ENCODE measurements at regions of chr20 and their contacts with region 1.

Region 1: GRCh38 chr20:32902456-32903420 is 44.0 kb downstream of the EFCAB8 start:
- DNase-seq: peak; percentile 90
- H3K4me3 ChIP-seq: no peak overlapping the region
- H3K27ac ChIP-seq: no peak overlapping the region
- H3K4me1 ChIP-seq: peaks cover 0 to 7% (median 2%) of the 10 kb centered on the region in 6 donors
- H3K27me3 ChIP-seq: no peaks in the 10 kb centered on the region
- CTCF ChIP-seq: peak; percentile 88 to 97 (median 94)
- POLR2A ChIP-seq: no peak

Region 2: GRCh38 chr20:33005132-33005566 is 102.4 kb after region 1 on chr20:
- intact Hi-C with region 1: loop called (anchors 5 kb)
- DNase-seq: no peak
- H3K4me3 ChIP-seq: no peak overlapping the region
- H3K27ac ChIP-seq: no peak overlapping the region
- H3K4me1 ChIP-seq: peaks cover 0 to 14% (median 1%) of the 10 kb centered on the region in 6 donors
- H3K27me3 ChIP-seq: no peaks in the 10 kb centered on the region
- CTCF ChIP-seq: peak in 8 of 11 experiments; percentile 22 to 65 (median 46)
- POLR2A ChIP-seq: no peak

Region 3: DNA sequence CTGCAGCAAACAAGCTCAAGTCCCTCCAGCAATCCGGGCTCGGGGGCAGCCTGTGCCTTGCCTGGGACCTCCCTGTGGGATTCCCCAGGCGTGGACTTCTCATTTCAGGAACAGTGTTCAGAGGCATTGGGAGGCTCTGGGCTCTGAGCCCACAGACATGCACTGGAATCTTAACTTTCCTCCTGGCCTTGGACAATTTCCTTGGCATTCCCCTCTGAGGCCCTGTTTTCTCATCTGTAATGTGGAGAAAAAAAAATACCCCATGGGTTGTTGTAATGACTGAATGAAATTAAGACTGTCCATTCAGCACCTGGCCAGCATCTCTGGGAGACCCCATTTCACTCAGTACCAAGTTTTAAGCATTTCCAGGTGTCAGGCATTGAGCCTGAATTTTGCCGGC is 194.3 kb after region 1 on chr20:
- intact Hi-C with region 1: loop called (anchors 2 kb)
- DNase-seq: no peak
- H3K4me3 ChIP-seq: no peak overlapping the region
- H3K27ac ChIP-seq: no peak overlapping the region
- H3K4me1 ChIP-seq: peaks cover 0 to 13% (median 0%) of the 10 kb centered on the region in 6 donors
- H3K27me3 ChIP-seq: peaks cover 0 to 3% (median 0%) of the 10 kb centered on the region in 7 donors
- CTCF ChIP-seq: no peak
- POLR2A ChIP-seq: no peak

Region 4: DNA sequence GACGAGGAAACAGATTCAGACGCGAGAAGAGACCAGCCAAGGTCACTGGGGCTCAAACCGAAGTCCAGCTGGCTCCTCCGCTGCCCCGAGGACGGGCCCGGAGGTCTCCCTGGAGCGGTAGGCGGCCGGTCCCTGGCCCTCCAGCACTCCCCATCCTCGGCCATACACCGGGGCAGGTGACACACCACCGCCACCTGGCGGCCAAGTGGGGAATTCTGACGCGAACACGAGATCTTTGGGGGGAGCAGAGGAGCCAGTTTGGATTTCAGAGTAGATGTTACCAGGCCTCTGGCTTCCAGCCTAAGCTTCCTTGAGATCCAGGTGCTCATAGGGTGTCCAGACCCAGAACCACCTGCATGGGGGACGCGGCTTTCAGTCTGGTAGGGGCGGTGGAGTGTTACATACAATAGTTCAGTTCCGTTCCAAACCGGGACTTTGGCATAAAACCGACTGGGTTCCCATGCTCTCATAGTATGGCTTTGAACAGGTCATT is 396.4 kb after region 1 on chr20:
- intact Hi-C with region 1: loop called (anchors 5 kb)
- DNase-seq: peak; percentile 91
- H3K4me3 ChIP-seq: no peak overlapping the region
- H3K27ac ChIP-seq: no peak overlapping the region
- H3K4me1 ChIP-seq: peaks cover 4 to 8% (median 6%) of the 10 kb centered on the region in 6 donors
- H3K27me3 ChIP-seq: peaks cover 0 to 37% (median 0%) of the 10 kb centered on the region in 7 donors
- CTCF ChIP-seq: peak; percentile 52 to 90 (median 83)
- POLR2A ChIP-seq: no peak